GM13976 (cell line): ENCODE measurements at regions of chr12 and their contacts with region 1.

Region 1: GRCh38 chr12:57459055-57459749 is 383 bp upstream of the GLI1 start:
- DNase-seq: peak; percentile 85
- CTCF ChIP-seq: peak; percentile 98

Region 2: DNA sequence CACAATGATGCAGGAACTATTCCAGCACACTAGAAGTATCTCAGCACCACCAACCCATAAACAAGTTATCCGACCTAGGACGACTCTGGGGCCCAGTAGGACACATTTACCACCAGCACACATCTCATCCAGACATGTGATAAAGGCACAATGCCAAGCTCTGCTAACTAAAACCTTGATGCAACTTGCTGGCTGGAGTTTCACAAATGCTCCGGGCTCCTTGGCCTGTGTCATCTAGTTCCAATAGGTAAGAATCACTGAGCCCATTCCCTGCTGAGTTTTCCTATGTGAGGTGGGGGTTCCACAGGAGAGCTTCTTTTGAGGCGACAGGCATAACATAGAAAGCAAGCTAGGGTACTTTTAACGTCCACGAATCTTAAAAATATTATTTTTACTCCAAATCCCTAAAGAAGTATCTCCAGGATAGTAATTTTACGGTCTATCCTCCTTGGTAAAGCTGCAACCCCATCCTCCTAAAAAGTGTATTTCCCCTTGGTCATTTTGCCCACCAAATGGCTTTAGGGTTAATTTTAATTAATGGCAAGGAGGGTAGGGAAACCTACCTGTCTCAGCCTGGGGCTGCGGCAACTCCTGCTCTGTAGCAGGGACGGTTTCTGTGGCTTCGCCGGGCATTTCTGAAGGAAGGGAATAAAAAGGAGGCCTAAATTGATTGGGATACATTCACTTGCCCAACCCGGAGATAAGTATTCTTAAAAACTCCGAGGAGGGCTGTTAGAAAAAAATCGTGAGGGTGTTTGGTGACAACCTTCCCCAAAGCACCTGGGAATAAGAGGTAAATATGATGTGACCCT is 735.1 kb before region 1 on chr12:
- in situ Hi-C with region 1: no loop called
- DNase-seq: no peak
- CTCF ChIP-seq: no peak

Region 3: GRCh38 chr12:57280211-57281062 is 178.8 kb before region 1 on chr12:
- in situ Hi-C with region 1: loop called (anchors 10 kb)
- DNase-seq: peak; percentile 83
- CTCF ChIP-seq: no peak

Region 4: GRCh38 chr12:57389033-57389432 is 70.2 kb before region 1 on chr12:
- in situ Hi-C with region 1: no loop called
- DNase-seq: no peak
- CTCF ChIP-seq: no peak

Region 5: GRCh38 chr12:58148405-58148804 is 689.2 kb after region 1 on chr12:
- in situ Hi-C with region 1: no loop called
- DNase-seq: no peak
- CTCF ChIP-seq: no peak